GM12878 (cell line): ENCODE measurements at regions of chr22 and their contacts with region 1.

Region 1: DNA sequence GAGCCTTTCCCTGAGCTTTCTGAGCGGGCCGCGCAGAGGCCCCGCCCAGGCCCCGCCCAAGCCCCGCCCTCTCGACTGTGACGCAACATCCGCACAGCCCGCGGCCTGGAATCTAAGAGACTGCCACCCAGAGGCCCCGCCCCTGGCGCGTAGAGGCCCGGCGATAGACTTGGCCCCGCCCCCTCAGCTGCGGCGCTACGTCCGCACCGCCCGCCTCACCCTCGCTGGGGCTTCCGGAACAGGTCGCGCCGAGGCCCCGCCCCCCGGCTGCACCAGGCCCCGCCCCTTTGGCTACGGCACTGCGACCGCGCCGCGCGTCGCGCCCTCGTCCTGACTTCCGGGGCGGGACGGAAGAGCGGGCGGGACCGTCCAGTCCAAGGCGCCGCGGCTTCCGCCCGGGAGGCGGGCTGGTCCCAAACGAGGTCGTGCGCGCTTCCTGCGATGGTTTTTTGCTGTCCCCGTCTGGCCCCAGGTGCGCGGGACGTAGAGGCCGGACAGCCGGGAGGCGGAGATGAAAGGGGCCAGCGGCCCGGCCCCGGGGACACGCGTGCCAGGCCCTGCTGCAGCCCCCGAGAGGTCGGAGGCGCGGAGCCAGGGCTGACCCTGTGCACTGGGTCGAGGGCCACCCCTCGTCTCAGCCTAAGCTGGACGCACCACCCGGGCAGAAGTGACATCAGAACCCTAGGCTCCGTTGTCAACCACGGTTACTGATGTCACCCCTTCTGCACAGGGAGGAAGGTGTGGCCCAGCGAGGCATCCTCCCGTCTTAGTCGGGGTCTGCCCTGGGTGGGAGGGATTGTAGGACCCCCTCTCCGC is 59.0 kb upstream of the WNT7B start:
- DNase-seq: peak; percentile 85
- ATAC-seq: peak; percentile 97
- H3K4me3 ChIP-seq: peak overlapping the region; percentile 91
- H3K27ac ChIP-seq: peak overlapping the region; percentile 88
- H3K4me1 ChIP-seq: peaks cover 9% of the 10 kb centered on the region
- H3K27me3 ChIP-seq: no peaks in the 10 kb centered on the region; a peak in 1 of 4 replicates
- CTCF ChIP-seq: no peak
- EP300 ChIP-seq: no peak; a peak in 1 of 4 replicates
- POLR2A ChIP-seq: peak; percentile 96
- RAD21 ChIP-seq: no peak

Region 2: DNA sequence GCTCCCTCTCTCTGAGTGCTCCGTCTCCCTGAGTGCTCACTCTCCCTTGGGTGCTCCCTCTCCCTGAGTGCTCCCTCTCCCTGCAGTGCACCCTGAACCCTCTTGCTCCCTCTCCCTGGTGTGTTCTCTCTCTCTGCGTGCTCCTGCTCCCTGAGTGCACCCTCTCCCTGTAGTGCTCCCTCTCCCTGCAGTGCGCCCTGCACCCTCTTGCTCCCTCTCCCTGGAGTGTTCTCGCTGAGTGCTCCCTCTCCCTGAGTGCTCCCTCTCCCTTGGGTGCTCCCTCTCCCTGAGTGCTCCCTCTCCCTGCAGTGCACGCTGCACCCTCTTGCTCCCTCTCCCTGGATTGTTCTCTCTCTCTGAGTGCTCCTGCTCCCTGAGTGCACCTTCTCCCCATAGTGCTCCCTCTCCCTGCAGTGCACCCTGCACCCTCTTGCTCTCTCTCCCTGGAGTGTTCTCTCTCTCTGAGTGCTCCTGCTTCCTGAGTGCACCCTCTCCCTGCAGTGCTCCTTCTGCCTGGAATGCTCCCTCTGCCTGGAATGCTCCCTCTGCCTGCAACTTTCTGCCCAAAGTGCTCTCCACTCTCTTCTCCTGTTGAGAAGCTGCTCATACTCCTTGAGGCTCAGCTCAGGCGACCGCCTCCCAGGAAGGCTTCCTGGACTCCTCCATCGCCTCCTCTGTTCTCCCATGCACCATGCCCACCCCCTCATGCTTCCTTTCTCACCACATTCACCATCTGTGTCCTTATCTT is 10.6 kb before region 1 on chr22:
- CTCF ChIA-PET with region 1: no interaction called
- POLR2A ChIA-PET with region 1: no interaction called
- RAD21 ChIA-PET with region 1: no interaction called
- SMC1A ChIA-PET with region 1: no interaction called
- in situ Hi-C with region 1: no loop called
- intact Hi-C with region 1: no loop called
- DNase-seq: no peak
- ATAC-seq: no peak
- H3K4me3 ChIP-seq: no peak overlapping the region
- H3K27ac ChIP-seq: no peak overlapping the region
- H3K4me1 ChIP-seq: no peaks in the 10 kb centered on the region
- H3K27me3 ChIP-seq: peaks cover 9% of the 10 kb centered on the region in 2 experiments; a peak in 3 of 4 replicates
- CTCF ChIP-seq: no peak
- EP300 ChIP-seq: no peak
- POLR2A ChIP-seq: no peak
- RAD21 ChIP-seq: no peak

Region 3: DNA sequence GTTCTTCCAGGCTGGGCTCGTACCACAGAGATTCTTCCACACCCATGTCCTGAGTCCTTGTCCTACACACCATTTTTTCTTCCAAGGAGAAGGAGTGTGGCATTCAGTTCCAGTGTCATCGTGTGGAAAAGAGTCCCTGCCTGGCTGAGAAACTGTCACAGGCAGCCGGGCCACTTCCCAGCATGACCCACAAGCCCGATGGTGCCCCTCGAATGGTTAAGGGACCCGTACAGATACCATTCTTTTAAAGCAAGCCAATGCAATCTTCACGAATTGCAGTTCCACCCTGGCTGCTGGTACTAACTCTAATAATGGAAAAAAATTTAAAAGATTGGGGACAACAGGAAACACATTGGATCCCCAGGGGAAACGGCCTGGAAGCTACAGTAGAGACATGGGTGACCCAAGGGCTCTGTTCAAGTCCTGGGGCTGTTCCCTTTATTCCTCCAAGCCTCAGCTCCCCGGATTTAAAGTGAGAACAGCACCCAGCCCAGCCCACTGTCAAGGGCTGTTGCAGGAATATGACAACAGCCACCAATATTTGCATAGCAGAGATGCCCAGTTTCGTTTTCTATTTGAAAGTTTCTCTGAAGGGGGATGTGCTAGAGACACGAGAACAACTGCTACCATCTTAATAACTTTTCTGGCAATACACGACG is 21.9 kb after region 1 on chr22:
- CTCF ChIA-PET with region 1: no interaction called
- POLR2A ChIA-PET with region 1: no interaction called
- RAD21 ChIA-PET with region 1: interaction called, 4 read pairs
- SMC1A ChIA-PET with region 1: no interaction called
- in situ Hi-C with region 1: no loop called
- intact Hi-C with region 1: loop called (anchors 1 kb)
- DNase-seq: peak; percentile 56
- ATAC-seq: peak; percentile 95
- H3K4me3 ChIP-seq: peak overlapping the region; percentile 25; the same call in 1 of the 2 replicates
- H3K27ac ChIP-seq: peak overlapping the region; percentile 79
- H3K4me1 ChIP-seq: peaks cover 28% of the 10 kb centered on the region
- H3K27me3 ChIP-seq: no peaks in the 10 kb centered on the region; a peak in 2 of 4 replicates
- CTCF ChIP-seq: no peak
- EP300 ChIP-seq: no peak
- POLR2A ChIP-seq: peak; percentile 55
- RAD21 ChIP-seq: no peak